CD8-positive, alpha-beta T cell (primary cell): ENCODE measurements at regions of chr18 and their contacts with region 1.

Region 1: GRCh38 chr18:43949291-43949690 is 672.0 kb upstream of the SYT4 start:
- DNase-seq: no peak
- ATAC-seq: no peak
- H3K4me3 ChIP-seq: no peak overlapping the region
- H3K4me3 Mint-ChIP-seq: no peak overlapping the region
- H3K27ac ChIP-seq: no peak overlapping the region
- H3K27ac Mint-ChIP-seq: no peak overlapping the region
- H3K4me1 ChIP-seq: no peaks in the 10 kb centered on the region
- H3K4me1 Mint-ChIP-seq: no peaks in the 10 kb centered on the region
- H3K27me3 ChIP-seq: no peaks in the 10 kb centered on the region
- H3K27me3 Mint-ChIP-seq: no peaks in the 10 kb centered on the region
- CTCF ChIP-seq: no peak

Region 2: GRCh38 chr18:43994381-43994780 is 45.1 kb after region 1 on chr18:
- CTCF ChIA-PET with region 1: no interaction called
- POLR2A ChIA-PET with region 1: no interaction called
- intact Hi-C with region 1: loop called in 1 of 2 experiments (anchors 10 kb)
- DNase-seq: no peak
- ATAC-seq: no peak
- H3K4me3 ChIP-seq: no peak overlapping the region
- H3K4me3 Mint-ChIP-seq: no peak overlapping the region
- H3K27ac ChIP-seq: no peak overlapping the region
- H3K27ac Mint-ChIP-seq: no peak overlapping the region
- H3K4me1 ChIP-seq: no peaks in the 10 kb centered on the region
- H3K4me1 Mint-ChIP-seq: no peaks in the 10 kb centered on the region
- H3K27me3 ChIP-seq: no peaks in the 10 kb centered on the region
- H3K27me3 Mint-ChIP-seq: no peaks in the 10 kb centered on the region
- CTCF ChIP-seq: no peak